Stomach (tissue), 19 donors: ENCODE measurements at regions of chr14 and their contacts with region 1.

Region 1: DNA sequence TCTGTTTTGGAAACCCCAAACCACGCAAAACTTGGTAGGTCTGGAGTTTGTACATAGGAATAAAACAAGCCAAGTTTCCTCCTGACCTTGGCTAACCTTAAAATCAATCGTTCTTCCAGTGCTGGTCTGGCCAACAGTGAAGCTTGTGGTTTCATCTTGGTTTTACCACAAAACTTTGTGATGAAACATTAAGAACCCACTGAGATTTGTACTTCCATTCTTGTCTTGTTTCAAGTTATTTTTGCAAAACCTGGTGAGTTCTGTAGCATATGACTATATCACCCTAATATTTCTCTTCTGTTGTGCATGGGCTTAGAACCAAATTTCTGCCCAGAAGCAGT is 26.4 kb downstream of the SIX1 start:
- DNase-seq: no peak
- H3K4me3 ChIP-seq: no peak overlapping the region
- H3K27ac ChIP-seq: peak overlapping the region in 2 of 5 donors; percentile 24 to 45
- H3K4me1 ChIP-seq: peaks cover 0 to 39% (median 27%) of the 10 kb centered on the region in 4 donors
- H3K27me3 ChIP-seq: no peaks in the 10 kb centered on the region
- CTCF ChIP-seq: no peak
- EP300 ChIP-seq: no peak
- POLR2A ChIP-seq: no peak

Region 2: GRCh38 chr14:61025251-61026223 is 402.6 kb after region 1 on chr14:
- intact Hi-C with region 1: loop called (anchors 10 kb)
- DNase-seq: peak; percentile 56 to 87
- H3K4me3 ChIP-seq: no peak overlapping the region
- H3K27ac ChIP-seq: no peak overlapping the region
- H3K4me1 ChIP-seq: no peaks in the 10 kb centered on the region
- H3K27me3 ChIP-seq: no peaks in the 10 kb centered on the region
- CTCF ChIP-seq: peak in 5 of 7 experiments; percentile 68 to 83 (median 74)
- EP300 ChIP-seq: no peak
- POLR2A ChIP-seq: no peak

Region 3: GRCh38 chr14:61252369-61253063 is 629.6 kb after region 1 on chr14:
- intact Hi-C with region 1: loop called (anchors 5 kb)
- DNase-seq: peak; percentile 69 to 95
- H3K4me3 ChIP-seq: no peak overlapping the region
- H3K27ac ChIP-seq: no peak overlapping the region
- H3K4me1 ChIP-seq: peaks cover 0 to 9% (median 2%) of the 10 kb centered on the region in 4 donors
- H3K27me3 ChIP-seq: peaks cover 0 to 3% (median 0%) of the 10 kb centered on the region in 3 donors
- CTCF ChIP-seq: peak in 5 of 7 experiments; percentile 61 to 82 (median 69)
- EP300 ChIP-seq: no peak
- POLR2A ChIP-seq: no peak